MCF 10A (cell line): ENCODE measurements at regions of chr19 and their contacts with region 1.

Region 1: GRCh38 chr19:52028027-52028779 is at the start of gene ZNF614:
- DNase-seq: peak; percentile 88
- H3K4me3 Mint-ChIP-seq: peak within 1 kb of the TSS; percentile 76
- H3K27ac Mint-ChIP-seq: peak within 1 kb of the TSS; percentile 84
- H3K4me1 Mint-ChIP-seq: peaks cover 13% of the 10 kb centered on the region
- H3K27me3 Mint-ChIP-seq: no peaks in the 10 kb centered on the region
- CTCF ChIP-seq: no peak
- total RNA-seq, gene ZNF614: 10.2 and 10.3 TPM in 2 replicates

Region 2: GRCh38 chr19:52007806-52008557 is 20.2 kb before region 1 on chr19 and contains the start of gene ZNF615:
- CTCF ChIA-PET with region 1: no interaction called
- POLR2A ChIA-PET with region 1: interaction called, 31 read pairs
- intact Hi-C with region 1: no loop called
- DNase-seq: peak; percentile 88
- H3K4me3 Mint-ChIP-seq: peak within 1 kb of the TSS; percentile 99
- H3K27ac Mint-ChIP-seq: peak within 1 kb of the TSS; percentile 98
- H3K4me1 Mint-ChIP-seq: peaks cover 8% of the 10 kb centered on the region
- H3K27me3 Mint-ChIP-seq: no peaks in the 10 kb centered on the region
- CTCF ChIP-seq: no peak
- total RNA-seq, gene ZNF615: 7.3 and 9.0 TPM in 2 replicates